Mammary epithelial cell (primary cell): ENCODE measurements at regions of chr5 and their contacts with region 1.

Region 1: DNA sequence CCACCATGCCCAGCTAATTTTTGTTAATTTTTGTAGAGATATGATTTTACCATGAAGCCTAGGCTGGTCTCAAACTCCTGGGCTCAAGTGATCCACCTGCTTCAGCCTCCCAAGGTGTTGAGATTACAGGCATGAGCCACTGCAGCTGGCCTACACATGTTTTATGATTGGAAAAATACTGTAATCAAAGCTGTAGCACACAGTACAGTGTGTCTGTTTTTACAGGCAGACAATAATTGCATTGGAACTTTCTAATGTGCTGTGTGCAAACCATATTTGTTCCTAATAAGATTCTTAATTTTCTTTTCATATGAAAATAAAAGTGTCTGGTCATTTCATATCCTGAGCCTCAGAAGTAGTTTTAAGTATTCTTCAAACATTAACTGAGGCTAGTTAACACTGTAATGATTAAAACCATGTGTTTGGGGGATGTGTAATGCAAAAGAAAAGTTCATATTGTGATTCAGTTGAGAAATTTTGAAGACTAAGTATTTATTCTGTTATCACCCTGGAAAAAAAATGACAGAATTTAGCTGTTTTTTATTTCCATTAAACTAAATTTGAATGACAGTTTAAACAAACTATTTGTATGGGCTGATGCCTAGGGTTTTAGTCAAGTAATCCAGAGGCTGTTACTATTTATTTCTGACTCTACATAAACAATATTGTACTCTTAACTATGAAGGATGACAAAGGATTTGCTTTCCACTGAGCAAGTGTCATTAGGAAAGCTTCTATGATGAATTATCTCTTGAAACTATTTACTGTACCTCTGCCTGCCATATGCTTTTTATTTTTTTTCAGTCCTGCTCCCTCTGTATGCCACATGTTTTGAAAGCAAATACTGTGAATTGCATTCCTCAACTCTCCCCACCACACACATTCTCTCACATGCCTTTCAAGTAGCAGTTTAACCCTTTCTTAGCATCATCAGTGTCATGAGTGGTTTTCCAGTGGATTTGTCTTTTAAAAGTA is 111.5 kb downstream of the MTREX start:
- DNase-seq: no peak
- H3K4me3 ChIP-seq: no peak overlapping the region
- H3K27ac ChIP-seq: no peak overlapping the region
- H3K4me1 ChIP-seq: no peaks in the 10 kb centered on the region
- H3K27me3 ChIP-seq: no peaks in the 10 kb centered on the region
- CTCF ChIP-seq: no peak

Region 2: DNA sequence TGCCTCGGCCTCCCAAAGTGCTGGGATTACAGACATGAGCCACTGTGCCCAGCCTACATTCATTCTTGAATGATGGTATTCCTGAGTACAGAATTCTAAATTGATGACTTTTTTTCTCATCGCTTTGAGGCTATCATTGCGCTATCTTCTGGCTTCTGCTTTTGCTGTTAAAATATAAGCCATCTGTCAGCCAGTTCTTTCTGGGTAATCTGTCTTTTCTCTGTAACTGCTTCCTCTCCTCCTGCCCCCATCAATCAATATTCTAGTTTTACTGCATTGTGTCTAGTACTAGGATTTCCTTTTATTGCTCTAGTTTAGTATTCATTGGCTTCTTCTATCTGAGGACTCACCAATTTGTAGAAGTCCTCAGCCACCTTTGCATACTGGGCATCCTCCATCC is 26.5 kb after region 1 on chr5:
- CTCF ChIA-PET with region 1: interaction called, 12 read pairs
- dilution Hi-C with region 1: no loop called
- in situ Hi-C with region 1: no loop called
- intact Hi-C with region 1: no loop called
- DNase-seq: no peak
- H3K4me3 ChIP-seq: no peak overlapping the region
- H3K27ac ChIP-seq: no peak overlapping the region
- H3K4me1 ChIP-seq: no peaks in the 10 kb centered on the region
- H3K27me3 ChIP-seq: no peaks in the 10 kb centered on the region
- CTCF ChIP-seq: no peak